Activated naive CD4-positive, alpha-beta T cell treated with anti-CD3 and anti-CD28 coated beads for 36 hours (primary cell): ENCODE measurements at regions of chr14 and their contacts with region 1.

Region 1: GRCh38 chr14:105045710-105046326 is 19.4 kb downstream of the GPR132 start:
- DNase-seq: peak; percentile 95
- H3K4me3 Mint-ChIP-seq: no peak overlapping the region
- H3K27ac Mint-ChIP-seq: no peak overlapping the region
- H3K4me1 Mint-ChIP-seq: peaks cover 5% of the 10 kb centered on the region
- H3K27me3 Mint-ChIP-seq: no peaks in the 10 kb centered on the region

Region 2: GRCh38 chr14:104895786-104896661 is 149.8 kb before region 1 on chr14:
- CTCF ChIA-PET with region 1: interaction called, 5 read pairs
- intact Hi-C with region 1: loop called (anchors 1 kb)
- DNase-seq: no peak
- H3K4me3 Mint-ChIP-seq: no peak overlapping the region
- H3K27ac Mint-ChIP-seq: no peak overlapping the region
- H3K4me1 Mint-ChIP-seq: no peaks in the 10 kb centered on the region
- H3K27me3 Mint-ChIP-seq: no peaks in the 10 kb centered on the region

Region 3: GRCh38 chr14:104976198-104977007 is 69.4 kb before region 1 on chr14:
- CTCF ChIA-PET with region 1: interaction called, 129 read pairs
- intact Hi-C with region 1: loop called (anchors 1 kb)
- DNase-seq: peak; percentile 89
- H3K4me3 Mint-ChIP-seq: peak overlapping the region; percentile 30
- H3K27ac Mint-ChIP-seq: no peak overlapping the region
- H3K4me1 Mint-ChIP-seq: peaks cover 11% of the 10 kb centered on the region
- H3K27me3 Mint-ChIP-seq: peaks cover 17% of the 10 kb centered on the region

Region 4: GRCh38 chr14:105012171-105012985 is 33.4 kb before region 1 on chr14:
- CTCF ChIA-PET with region 1: interaction called, 21 read pairs
- intact Hi-C with region 1: loop called (anchors 5 kb)
- DNase-seq: no peak
- H3K4me3 Mint-ChIP-seq: no peak overlapping the region
- H3K27ac Mint-ChIP-seq: no peak overlapping the region
- H3K4me1 Mint-ChIP-seq: peaks cover 26% of the 10 kb centered on the region
- H3K27me3 Mint-ChIP-seq: no peaks in the 10 kb centered on the region

Region 5: GRCh38 chr14:105026803-105027563 is 18.8 kb before region 1 on chr14:
- CTCF ChIA-PET with region 1: interaction called, 23 read pairs
- intact Hi-C with region 1: no loop called
- DNase-seq: no peak
- H3K4me3 Mint-ChIP-seq: no peak overlapping the region
- H3K27ac Mint-ChIP-seq: peak overlapping the region; percentile 17
- H3K4me1 Mint-ChIP-seq: peaks cover 41% of the 10 kb centered on the region
- H3K27me3 Mint-ChIP-seq: no peaks in the 10 kb centered on the region

Region 6: GRCh38 chr14:105065280-105066228 is 19.7 kb after region 1 on chr14 and contains the start of gene GPR132:
- CTCF ChIA-PET with region 1: interaction called, 10 read pairs
- intact Hi-C with region 1: no loop called
- DNase-seq: peak; percentile 97
- H3K4me3 Mint-ChIP-seq: peak within 1 kb of the TSS; percentile 84
- H3K27ac Mint-ChIP-seq: peak within 1 kb of the TSS; percentile 96
- H3K4me1 Mint-ChIP-seq: peaks cover 81% of the 10 kb centered on the region
- H3K27me3 Mint-ChIP-seq: no peaks in the 10 kb centered on the region
- total RNA-seq, gene GPR132: 11.3 to 15.3 TPM

Region 7: DNA sequence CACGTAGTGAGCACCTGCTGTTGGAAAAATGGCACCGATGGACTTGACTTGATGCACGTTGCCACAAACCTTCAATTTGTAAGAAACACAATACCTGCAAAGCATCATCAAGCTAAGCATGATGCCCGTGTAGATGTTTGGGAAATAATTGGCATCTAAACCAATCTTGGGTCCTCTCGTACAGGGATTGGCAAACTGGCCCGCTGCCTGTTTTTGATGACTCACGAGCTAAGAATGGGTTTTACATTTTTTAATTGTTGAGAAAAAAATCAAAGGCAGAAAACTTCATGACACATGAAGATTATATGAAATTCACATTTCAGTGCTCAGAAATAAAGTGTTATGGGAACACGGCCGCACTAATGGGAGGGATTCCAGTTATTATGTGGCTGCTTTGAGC is 384.7 kb after region 1 on chr14:
- CTCF ChIA-PET with region 1: no interaction called
- intact Hi-C with region 1: no loop called
- DNase-seq: no peak
- H3K4me3 Mint-ChIP-seq: no peak overlapping the region
- H3K27ac Mint-ChIP-seq: no peak overlapping the region
- H3K4me1 Mint-ChIP-seq: peaks cover 7% of the 10 kb centered on the region
- H3K27me3 Mint-ChIP-seq: no peaks in the 10 kb centered on the region